Left cardiac atrium (tissue), 4 donors: ENCODE measurements at regions of chr4 and their contacts with region 1.

Region 1: GRCh38 chr4:42600578-42600977 is 56.3 kb downstream of the ATP8A1 start:
- DNase-seq: no peak
- ATAC-seq: no peak

Region 2: DNA sequence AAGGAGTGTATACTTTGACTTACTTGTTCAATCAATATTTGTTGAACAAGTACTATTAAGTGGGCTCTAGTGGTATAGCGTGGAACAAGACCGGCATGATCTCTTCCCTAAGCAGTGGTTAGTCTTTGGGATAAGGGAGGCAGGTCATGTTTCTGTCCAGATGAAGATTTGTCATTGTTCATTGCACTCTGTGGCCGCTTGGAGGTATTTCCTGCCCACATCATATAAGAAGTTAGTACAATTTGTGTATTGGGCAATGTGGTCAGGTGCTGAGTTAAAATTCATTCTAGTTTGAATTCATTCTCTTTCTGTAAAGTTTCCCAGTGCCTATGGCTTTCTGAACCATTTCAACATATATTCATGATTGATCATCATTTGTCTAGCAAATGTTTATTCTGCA is 304.4 kb before region 1 on chr4:
- intact Hi-C with region 1: no loop called
- DNase-seq: no peak
- ATAC-seq: no peak

Region 3: GRCh38 chr4:42656944-42657792 is 56.6 kb after region 1 on chr4 and contains the start of gene ATP8A1:
- intact Hi-C with region 1: loop called in 1 of 2 experiments (anchors 10 kb)
- DNase-seq: peak; percentile 95
- ATAC-seq: peak; percentile 98
- total RNA-seq, gene ATP8A1: 22.3 to 23.3 TPM

Region 4: GRCh38 chr4:42750091-42750490 is 149.5 kb after region 1 on chr4:
- intact Hi-C with region 1: no loop called
- DNase-seq: no peak
- ATAC-seq: peak; percentile 69 to 87